Activated CD4-positive, alpha-beta T cell treated with anti-CD3 and anti-CD28 coated beads for 36 hours (primary cell): ENCODE measurements at regions of chrX and their contacts with region 1.

Region 1: DNA sequence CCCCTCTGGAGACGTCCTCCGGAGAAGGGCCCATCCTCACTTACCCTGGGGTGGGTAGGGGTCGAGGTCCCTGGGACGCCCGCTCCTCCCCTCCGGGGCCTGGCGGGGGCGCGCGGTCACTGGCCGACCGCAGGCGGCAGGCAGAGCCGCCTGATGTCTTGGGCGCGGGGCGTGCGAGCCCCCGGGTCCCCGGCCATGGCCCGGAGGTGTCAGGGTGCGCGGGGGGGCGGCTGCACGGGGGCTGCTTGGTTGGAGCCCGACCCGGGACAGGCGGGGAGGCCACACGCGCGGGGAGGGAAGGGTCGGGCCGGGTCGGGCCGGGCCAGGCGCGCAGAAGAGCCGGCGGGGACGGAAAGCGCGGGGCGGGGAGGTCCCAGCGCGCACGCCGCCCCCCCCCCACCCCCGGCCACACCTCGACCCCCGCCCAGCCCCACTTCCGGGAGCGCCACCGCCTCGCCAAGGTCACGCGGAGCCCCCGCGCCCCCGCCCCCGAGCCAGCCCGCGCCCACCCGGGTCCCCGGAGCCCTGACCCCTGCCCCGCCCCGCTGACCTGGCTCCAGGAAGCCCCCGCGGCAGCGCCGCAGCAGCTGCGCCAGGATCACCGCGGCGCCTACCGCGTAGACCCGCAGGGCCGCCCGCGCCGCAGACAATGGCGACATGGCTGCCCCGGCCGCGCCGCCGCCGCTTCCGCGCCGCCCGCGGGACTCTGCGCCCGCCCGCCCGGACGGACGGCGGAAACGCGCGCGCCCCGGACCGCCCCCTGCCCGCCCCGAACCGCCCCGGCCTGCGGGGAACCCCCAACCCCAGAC is at the starts of genes DHRSX and ZBED1:
- DNase-seq: peak; percentile 72
- ATAC-seq: peak; percentile 78
- H3K4me3 Mint-ChIP-seq: peak within 1 kb of the TSS; percentile 74
- H3K27ac Mint-ChIP-seq: peak within 1 kb of the TSS; percentile 81
- H3K4me1 Mint-ChIP-seq: peaks cover 26% of the 10 kb centered on the region
- H3K27me3 Mint-ChIP-seq: no peaks in the 10 kb centered on the region
- total RNA-seq, gene DHRSX: 13.8 to 17.7 TPM
- total RNA-seq, gene ZBED1: 30.0 to 33.6 TPM

Region 2: DNA sequence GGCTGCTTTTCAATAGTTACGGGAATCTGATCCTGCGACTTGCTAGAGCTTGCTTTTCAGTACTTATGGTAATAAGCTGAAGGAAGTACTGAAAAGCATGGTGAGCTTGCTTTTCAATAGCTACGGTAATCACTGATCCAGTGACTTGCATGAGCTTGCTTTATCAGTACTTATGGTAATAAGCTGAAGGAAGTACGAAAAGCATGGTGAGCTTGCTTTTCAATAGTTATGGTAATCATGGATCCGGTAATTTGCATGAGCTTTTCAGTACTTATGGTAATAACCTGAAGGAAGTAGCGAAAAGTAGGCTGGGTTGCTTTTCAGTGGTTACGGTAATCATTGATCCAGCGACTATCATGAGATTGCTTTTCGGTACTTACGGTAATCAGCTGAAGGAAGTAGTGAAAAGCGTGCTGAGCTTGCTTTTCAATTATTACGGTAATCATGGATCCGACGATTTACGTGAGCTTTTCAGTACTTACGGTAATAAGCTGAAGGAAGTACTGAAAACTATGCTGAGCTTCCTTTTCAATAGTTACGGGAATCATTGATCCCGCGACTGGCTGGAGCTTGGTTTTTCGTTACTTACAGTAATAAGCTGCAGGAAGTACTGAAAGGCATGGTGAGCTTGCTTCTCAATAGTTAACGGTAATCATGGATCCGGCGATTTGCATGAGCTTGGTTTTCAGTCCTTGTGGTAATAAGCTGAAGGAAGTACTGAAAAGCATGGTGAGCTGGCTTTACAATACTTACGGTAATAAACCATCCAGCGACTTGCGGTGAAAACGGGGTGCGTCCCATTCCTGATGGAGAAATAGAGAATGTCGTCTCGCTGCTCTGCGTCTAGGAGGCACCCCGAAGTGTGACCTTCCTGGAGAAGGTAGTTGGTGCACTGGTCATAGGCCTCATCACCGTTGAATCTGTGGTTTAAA is 1294.5 kb before region 1 on chrX:
- CTCF ChIA-PET with region 1: no interaction called
- POLR2A ChIA-PET with region 1: no interaction called
- intact Hi-C with region 1: loop called in 1 of 2 experiments (anchors 5 kb)
- DNase-seq: peak; percentile 46
- ATAC-seq: peak; percentile 53
- H3K4me3 Mint-ChIP-seq: peak overlapping the region; percentile 67
- H3K27ac Mint-ChIP-seq: peak overlapping the region; percentile 42
- H3K4me1 Mint-ChIP-seq: peaks cover 29% of the 10 kb centered on the region
- H3K27me3 Mint-ChIP-seq: peaks cover 4% of the 10 kb centered on the region

Region 3: GRCh38 chrX:2538031-2538757 is 37.7 kb after region 1 on chrX:
- CTCF ChIA-PET with region 1: no interaction called
- POLR2A ChIA-PET with region 1: no interaction called
- intact Hi-C with region 1: no loop called
- DNase-seq: no peak
- ATAC-seq: no peak
- H3K4me3 Mint-ChIP-seq: no peak overlapping the region
- H3K27ac Mint-ChIP-seq: no peak overlapping the region
- H3K4me1 Mint-ChIP-seq: no peaks in the 10 kb centered on the region
- H3K27me3 Mint-ChIP-seq: peaks cover 4% of the 10 kb centered on the region

Region 4: DNA sequence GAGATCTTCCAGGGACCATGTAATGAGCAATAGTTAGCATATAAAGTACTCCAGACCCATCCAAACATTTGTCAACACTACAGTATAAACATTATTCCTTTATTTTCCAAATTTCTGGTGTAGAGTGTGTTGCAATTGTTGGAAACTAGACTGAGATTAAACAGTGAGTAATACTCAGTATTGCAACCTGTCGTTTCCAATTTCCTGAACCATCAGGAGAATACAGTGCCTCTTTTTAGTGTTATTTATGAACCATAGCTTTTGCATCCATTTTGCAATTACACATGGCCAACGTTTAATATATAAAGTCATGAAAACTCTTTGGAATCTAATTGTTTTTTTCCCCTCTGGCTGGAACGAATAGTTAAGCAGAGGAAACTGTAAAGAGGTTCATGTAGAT is 58.7 kb after region 1 on chrX:
- CTCF ChIA-PET with region 1: no interaction called
- POLR2A ChIA-PET with region 1: no interaction called
- intact Hi-C with region 1: no loop called
- DNase-seq: no peak
- ATAC-seq: no peak
- H3K4me3 Mint-ChIP-seq: no peak overlapping the region
- H3K27ac Mint-ChIP-seq: no peak overlapping the region
- H3K4me1 Mint-ChIP-seq: no peaks in the 10 kb centered on the region
- H3K27me3 Mint-ChIP-seq: peaks cover 30% of the 10 kb centered on the region

Region 5: DNA sequence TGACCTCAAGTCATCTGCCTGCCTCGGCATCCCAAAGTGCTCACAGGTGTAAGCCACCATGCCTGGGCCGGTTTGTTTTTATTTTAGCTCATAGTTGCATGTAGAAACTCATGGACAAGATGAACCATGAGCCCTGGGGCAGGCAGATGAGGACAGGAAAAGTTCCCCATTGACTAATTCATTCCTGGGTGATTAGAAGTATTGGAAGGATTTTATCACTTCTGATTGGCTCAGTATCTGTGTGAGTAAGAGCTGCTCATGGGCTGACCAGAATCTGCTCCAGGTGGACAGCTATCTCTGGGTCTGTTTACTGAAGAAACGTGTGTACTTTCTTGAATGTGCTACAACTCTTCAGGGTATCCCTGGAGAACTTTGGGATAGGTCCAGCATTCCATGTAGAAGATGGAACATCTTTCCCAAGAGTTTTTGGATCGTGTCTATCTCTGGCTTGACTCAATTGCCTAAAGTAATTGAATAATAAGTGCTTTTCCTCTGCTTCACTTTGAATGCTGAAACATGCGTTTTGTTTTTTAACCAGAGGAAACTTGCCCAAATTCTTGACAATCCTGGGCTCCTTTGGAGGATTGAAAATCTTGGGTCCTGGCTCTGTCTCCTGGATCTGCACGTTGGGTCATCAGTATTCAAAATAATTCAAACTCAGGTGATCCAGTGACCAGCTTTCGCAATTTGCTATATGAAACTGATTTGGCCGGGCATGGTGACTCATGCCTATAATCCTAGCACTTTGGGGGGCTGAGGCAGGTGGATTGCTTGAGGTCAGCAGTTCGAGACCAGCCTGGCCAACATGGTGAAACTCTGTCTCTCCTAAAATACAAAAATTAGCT is 88.9 kb after region 1 on chrX:
- CTCF ChIA-PET with region 1: no interaction called
- POLR2A ChIA-PET with region 1: no interaction called
- intact Hi-C with region 1: loop called in 1 of 2 experiments (anchors 5 kb)
- DNase-seq: no peak
- ATAC-seq: no peak
- H3K4me3 Mint-ChIP-seq: no peak overlapping the region
- H3K27ac Mint-ChIP-seq: no peak overlapping the region
- H3K4me1 Mint-ChIP-seq: peaks cover 2% of the 10 kb centered on the region
- H3K27me3 Mint-ChIP-seq: peaks cover 3% of the 10 kb centered on the region

Region 6: GRCh38 chrX:2608638-2609430 is 108.4 kb after region 1 on chrX:
- CTCF ChIA-PET with region 1: no interaction called
- POLR2A ChIA-PET with region 1: no interaction called
- intact Hi-C with region 1: loop called in 1 of 2 experiments (anchors 1 kb)
- DNase-seq: peak; percentile 93
- ATAC-seq: peak; percentile 94
- H3K4me3 Mint-ChIP-seq: peak overlapping the region; percentile 83
- H3K27ac Mint-ChIP-seq: peak overlapping the region; percentile 82
- H3K4me1 Mint-ChIP-seq: peaks cover 47% of the 10 kb centered on the region
- H3K27me3 Mint-ChIP-seq: no peaks in the 10 kb centered on the region

Region 7: DNA sequence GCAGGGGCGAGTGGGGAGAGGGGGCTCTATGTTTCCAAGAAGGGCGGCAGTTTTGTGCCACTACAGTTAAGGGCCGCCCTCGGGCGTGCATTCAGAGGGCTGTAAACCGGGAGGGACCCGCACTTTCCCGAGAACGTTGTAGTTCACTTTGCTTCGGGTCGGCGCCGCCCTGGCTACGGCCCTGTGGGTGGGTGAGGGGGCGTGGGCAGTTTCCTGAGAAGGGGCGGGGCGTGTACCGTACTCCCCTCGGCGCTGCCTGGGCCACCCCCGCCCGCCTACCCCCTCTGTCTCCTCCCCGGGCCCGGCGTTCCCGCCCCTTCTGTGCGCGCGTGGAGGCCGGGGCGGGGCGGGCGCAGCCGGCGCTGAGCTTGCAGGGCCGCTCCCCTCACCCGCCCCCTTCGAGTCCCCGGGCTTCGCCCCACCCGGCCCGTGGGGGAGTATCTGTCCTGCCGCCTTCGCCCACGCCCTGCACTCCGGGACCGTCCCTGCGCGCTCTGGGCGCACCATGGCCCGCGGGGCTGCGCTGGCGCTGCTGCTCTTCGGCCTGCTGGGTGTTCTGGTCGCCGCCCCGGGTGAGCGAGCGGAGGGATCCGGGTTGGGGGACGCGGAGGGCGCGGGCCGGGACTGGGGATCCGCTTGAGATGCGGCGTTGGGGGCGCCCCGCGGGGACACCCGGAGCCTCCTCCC is 190.5 kb after region 1 on chrX and contains the start of gene CD99:
- CTCF ChIA-PET with region 1: no interaction called
- POLR2A ChIA-PET with region 1: no interaction called
- intact Hi-C with region 1: loop called in 1 of 2 experiments (anchors 5 kb)
- DNase-seq: peak; percentile 91
- ATAC-seq: peak; percentile 79
- H3K4me3 Mint-ChIP-seq: peak within 1 kb of the TSS; percentile 95
- H3K27ac Mint-ChIP-seq: peak within 1 kb of the TSS; percentile 100
- H3K4me1 Mint-ChIP-seq: peaks cover 34% of the 10 kb centered on the region
- H3K27me3 Mint-ChIP-seq: no peaks in the 10 kb centered on the region
- total RNA-seq, gene CD99: 169 to 216 TPM